ENCODE measurements at regions of chr1 and their contacts with region 1.

Region 1: DNA sequence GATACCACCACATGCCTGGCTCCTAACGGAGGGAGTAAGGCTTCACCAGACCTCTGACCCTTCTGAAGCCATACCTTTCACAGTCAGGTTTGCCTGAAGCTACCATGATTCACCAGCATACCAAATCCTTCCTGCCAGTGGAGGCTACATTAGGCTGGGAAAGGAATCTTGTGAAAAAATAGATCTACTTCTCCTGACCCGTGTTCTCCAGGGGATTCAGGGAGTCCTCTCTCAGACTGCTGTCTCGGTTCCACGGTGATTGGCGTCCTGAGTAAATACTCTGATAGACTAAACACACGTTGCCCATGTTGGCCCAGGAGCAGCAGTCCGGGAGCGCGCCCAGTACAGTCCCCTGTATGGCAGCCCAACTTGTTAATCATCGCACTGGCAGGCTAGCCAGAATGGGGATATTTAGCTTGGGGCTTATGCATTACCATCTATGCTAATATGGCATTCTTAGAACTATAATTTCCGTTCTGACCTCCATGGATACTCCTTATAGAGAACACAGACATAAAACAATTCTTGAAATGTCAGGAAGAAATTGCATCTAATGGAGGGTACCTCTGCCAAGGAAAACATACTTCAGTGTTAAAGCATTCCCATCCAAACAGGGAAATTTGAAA is 173.2 kb downstream of the ROR1 start:
- DNase-seq: peak in 4 of 5 donors; percentile 40 to 74 (median 44)
- ATAC-seq: peak; percentile 60 to 89 (median 84)
- H3K4me3 ChIP-seq: no peak overlapping the region
- H3K27ac ChIP-seq: peak overlapping the region in 7 of 12 donors; percentile 21 to 63 (median 47)
- H3K4me1 ChIP-seq: peaks cover 0 to 69% (median 29%) of the 10 kb centered on the region in 12 donors
- H3K27me3 ChIP-seq: no peaks in the 10 kb centered on the region
- CTCF ChIP-seq: no peak
- POLR2A ChIP-seq: no peak

Region 2: DNA sequence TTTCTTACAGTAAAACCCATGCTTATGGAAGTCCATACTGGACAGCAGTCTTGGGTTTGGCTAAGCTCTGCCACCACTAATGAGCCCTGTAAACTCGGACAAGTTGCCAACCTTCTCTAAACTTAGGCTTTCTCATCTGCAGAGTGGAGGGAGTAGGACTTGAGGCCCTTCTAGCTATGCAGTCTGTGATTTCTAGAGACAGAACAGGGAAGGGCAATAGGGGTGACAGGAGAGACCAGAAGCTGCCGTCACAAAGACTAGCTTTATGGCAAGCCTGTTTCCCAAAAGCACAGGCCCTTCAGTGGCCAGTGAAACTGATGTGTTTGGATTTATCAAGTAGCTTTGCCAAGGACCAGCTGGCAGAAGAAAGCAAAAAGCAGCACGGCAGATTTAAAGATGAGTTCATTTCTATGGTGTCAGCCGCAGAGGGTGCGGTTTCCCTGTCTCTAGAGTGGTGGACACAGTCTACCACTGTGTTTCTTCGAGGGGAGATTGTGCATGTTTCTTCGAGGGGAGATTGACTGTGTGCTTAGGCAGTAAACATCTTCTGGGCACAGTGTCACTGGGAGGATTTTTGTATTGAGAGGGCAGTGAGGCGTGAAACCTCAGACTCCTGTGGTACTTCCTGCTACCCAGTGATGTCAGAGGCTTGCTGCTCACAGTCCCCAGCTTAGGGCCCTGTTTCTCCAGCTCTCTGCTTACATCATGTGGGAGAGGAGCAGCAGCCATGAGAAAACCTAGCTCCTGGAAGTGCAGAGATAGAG is 54.2 kb before region 1 on chr1:
- intact Hi-C with region 1: no loop called
- DNase-seq: no peak
- ATAC-seq: peak; percentile 22 to 81 (median 68)
- H3K4me3 ChIP-seq: no peak overlapping the region
- H3K27ac ChIP-seq: peak overlapping the region in 6 of 12 donors; percentile 4 to 69 (median 22)
- H3K4me1 ChIP-seq: peaks cover 0 to 33% (median 3%) of the 10 kb centered on the region in 12 donors
- H3K27me3 ChIP-seq: no peaks in the 10 kb centered on the region
- CTCF ChIP-seq: no peak
- POLR2A ChIP-seq: no peak

Region 3: DNA sequence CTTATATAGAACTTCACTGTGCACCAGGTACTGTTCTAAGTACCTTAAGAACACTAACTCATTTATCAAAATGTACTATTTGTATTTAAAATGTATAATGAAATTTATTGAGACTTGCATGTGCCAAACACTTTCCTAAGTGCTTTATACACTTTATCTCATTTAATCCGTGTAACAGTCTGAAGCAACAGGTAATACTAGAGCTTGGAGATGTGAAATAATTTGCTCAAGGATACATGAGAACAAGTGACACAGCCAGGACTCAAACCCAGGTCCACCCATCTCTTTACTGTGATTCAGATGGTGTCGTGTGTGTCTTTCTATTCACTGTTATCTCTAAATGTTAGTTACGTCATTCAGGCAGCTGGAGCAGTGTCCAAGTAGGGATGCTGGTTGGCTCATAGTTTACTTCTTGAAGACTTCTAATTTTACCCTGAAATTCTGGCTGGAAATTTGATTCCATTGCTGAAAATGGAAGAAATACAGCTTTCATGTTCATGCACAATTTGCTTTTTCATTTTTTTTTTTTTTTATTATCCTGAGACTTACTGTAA is 86.8 kb after region 1 on chr1:
- intact Hi-C with region 1: loop called in 1 of 10 experiments (anchors 5 kb)
- DNase-seq: peak in 4 of 5 donors; percentile 22 to 50 (median 38)
- ATAC-seq: peak in 3 of 4 donors; percentile 78 to 87 (median 81)
- H3K4me3 ChIP-seq: no peak overlapping the region
- H3K27ac ChIP-seq: no peak overlapping the region
- H3K4me1 ChIP-seq: peaks cover 0 to 32% (median 10%) of the 10 kb centered on the region in 12 donors
- H3K27me3 ChIP-seq: no peaks in the 10 kb centered on the region
- CTCF ChIP-seq: no peak
- POLR2A ChIP-seq: no peak

Measured in heart left ventricle (tissue), 16 donors.